Sigmoid colon (tissue), 7 donors: ENCODE measurements at regions of chr1 and their contacts with region 1.

Region 1: DNA sequence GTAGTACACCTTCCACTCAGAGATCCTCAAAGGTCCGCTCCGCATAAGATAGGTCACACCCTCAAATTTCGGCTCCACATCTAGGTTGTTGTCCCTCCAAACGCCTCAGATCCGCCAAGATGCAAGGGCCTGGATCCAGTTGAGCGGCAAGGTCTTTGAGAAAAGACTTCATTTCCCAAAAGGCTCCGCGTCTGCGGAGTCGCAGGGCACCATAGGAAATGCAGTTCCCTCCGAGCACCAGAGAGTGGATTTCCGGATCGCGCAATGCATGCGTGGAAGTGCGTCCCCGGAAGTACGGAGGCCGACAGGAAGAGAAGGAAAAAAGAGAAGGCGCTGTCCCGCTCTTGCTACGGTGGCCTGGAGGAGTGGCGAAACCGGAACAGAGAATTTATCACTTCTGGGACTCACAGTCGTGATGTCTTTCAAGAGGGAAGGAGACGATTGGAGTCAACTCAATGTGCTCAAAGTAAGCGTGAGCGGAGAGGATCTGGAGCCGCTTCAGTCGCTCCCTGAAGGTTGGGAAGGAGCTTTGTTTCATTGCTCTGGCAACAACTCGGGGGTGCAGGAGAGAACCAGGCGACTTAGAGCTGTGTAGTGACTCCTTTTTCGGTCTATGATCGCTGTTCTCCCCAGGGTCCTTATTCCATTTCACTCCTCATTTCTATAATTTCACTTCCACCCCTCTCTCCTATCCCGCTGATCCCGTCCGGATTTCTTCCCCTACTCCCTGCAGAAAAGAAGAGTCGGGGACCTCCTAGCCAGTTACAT is at the starts of genes LYSMD1 and SCNM1:
- DNase-seq: peak; percentile 99
- H3K4me3 ChIP-seq: peak within 1 kb of the TSS; percentile 56 to 84 (median 78)
- H3K27ac ChIP-seq: peak within 1 kb of the TSS; percentile 84 to 93 (median 92)
- H3K4me1 ChIP-seq: peaks cover 0 to 32% (median 24%) of the 10 kb centered on the region in 4 donors
- H3K27me3 ChIP-seq: no peaks in the 10 kb centered on the region
- CTCF ChIP-seq: peak in 1 of 4 experiments; percentile 32
- EP300 ChIP-seq: peak in 2 of 4 donors; percentile 43 to 86
- POLR2A ChIP-seq: peak; percentile 27 to 30
- total RNA-seq, gene LYSMD1: 15.5 to 22.7 (median 19.0) TPM
- total RNA-seq, gene SCNM1: 17.5 to 24.2 (median 19.8) TPM

Region 2: DNA sequence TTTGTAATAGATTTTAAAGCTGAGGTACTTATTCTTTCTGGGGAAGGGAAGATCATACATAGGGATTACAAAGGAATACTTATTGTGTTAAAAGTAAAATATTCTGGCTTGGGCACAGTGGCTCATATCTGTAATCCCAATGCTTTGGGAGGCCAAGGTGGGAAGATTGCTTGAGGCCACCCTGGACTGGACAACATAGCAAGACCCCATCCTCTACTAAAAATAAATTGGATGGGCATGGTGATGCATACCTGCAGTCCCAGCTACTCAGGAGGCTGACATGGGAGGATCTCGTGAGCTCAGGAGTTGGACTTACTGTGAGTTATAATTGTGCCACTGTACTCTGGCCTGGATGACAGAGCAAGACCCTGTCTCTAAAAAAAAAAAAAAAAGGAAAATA is 67.8 kb before region 1 on chr1:
- intact Hi-C with region 1: no loop called
- DNase-seq: no peak
- H3K4me3 ChIP-seq: no peak overlapping the region
- H3K27ac ChIP-seq: no peak overlapping the region
- H3K4me1 ChIP-seq: no peaks in the 10 kb centered on the region
- H3K27me3 ChIP-seq: no peaks in the 10 kb centered on the region
- CTCF ChIP-seq: no peak
- EP300 ChIP-seq: no peak
- POLR2A ChIP-seq: no peak

Region 3: DNA sequence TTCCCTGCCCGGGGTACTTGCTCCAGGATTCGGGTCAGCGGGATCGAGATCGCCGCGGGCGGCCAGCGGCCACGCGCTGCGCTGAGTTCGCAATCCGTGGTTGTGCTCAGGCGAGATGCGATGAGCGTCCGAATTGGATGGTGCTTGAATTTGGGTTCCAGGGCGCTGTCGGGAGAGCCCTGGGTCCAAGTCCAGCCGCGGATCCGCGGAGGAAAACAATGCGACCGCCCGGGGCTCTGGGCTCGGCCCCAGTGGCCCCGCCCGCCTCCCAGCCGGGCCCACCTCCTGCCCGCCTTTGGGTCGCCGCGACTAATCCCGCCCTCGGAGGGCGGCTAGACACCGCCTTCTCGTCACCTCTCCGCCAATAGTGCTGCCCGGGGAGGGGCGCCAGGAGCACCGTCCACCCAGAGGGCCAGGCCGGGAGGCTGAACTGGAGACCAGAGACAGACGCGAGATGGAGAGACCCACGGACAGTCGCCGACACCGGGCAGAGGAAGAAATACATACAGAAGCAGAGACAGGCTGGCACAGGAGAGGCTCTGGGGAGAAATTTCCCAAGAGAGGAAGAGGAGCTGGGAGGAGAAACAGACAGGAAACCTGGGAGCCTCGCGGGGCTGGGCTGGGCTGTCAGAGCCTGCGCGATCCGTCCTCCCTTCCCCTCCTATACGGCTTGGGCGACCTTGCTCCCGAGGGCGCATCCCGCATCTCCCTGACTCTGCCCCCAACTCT is 19.3 kb before region 1 on chr1 and contains the start of gene SEMA6C:
- intact Hi-C with region 1: loop called (anchors 2 kb)
- DNase-seq: peak; percentile 98
- H3K4me3 ChIP-seq: peak within 1 kb of the TSS; percentile 75 to 84 (median 82)
- H3K27ac ChIP-seq: peak within 1 kb of the TSS; percentile 84 to 87 (median 86)
- H3K4me1 ChIP-seq: peaks cover 0 to 42% (median 28%) of the 10 kb centered on the region in 4 donors
- H3K27me3 ChIP-seq: no peaks in the 10 kb centered on the region
- CTCF ChIP-seq: no peak
- EP300 ChIP-seq: no peak
- POLR2A ChIP-seq: peak; percentile 70 to 74
- total RNA-seq, gene SEMA6C: 5.0 to 20.6 (median 7.8) TPM

Region 4: DNA sequence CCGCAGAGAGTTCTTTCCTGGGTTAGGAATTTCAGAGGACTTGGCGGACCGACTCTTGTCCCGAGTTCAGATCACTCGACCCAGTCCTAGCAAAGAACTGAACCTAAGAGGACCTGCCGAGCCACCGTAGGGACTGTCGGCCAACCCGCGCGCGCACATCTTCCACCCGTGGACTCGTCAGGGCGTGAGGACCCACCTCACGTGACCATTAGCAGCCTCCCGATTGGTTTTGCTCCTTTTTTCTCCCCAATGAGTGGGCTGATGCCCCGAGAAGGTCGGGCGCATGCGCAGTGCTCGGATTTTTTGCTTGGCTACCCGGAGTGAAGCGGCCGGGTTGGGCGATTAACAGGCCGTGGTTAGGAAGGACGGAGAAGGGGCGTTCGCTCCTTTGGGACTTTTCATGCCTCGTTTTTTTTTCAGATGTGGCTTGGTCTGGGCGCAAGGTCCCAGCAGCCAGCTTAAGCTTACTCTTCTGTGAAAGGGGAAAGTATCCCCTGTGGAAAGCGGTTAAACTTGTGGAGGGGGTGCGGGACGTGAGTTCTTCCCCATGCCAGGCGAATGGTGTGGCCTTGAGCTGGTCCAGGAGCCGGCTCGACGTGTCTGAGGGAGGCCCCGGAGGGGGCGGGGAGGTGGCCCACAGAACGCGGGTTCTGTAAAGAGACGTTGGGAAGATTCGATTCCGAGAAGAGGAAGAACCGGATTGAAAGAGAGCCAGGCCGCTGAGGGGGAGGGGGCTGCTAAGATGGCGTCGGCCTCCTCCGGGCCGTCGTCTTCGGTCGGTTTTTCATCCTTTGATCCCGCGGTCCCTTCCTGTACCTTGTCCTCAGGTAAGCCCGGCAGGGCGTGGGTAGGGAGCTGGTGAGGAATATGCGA is 32.6 kb after region 1 on chr1 and contains the start of gene PIP5K1A:
- intact Hi-C with region 1: no loop called
- DNase-seq: peak; percentile 100
- H3K4me3 ChIP-seq: peak within 1 kb of the TSS; percentile 62 to 88 (median 70)
- H3K27ac ChIP-seq: peak within 1 kb of the TSS; percentile 90 to 95 (median 93)
- H3K4me1 ChIP-seq: peaks cover 0 to 47% (median 38%) of the 10 kb centered on the region in 4 donors
- H3K27me3 ChIP-seq: no peaks in the 10 kb centered on the region
- CTCF ChIP-seq: no peak
- EP300 ChIP-seq: no peak
- POLR2A ChIP-seq: peak; percentile 84 to 93
- total RNA-seq, gene PIP5K1A: 33.2 to 51.5 (median 37.8) TPM

Region 5: DNA sequence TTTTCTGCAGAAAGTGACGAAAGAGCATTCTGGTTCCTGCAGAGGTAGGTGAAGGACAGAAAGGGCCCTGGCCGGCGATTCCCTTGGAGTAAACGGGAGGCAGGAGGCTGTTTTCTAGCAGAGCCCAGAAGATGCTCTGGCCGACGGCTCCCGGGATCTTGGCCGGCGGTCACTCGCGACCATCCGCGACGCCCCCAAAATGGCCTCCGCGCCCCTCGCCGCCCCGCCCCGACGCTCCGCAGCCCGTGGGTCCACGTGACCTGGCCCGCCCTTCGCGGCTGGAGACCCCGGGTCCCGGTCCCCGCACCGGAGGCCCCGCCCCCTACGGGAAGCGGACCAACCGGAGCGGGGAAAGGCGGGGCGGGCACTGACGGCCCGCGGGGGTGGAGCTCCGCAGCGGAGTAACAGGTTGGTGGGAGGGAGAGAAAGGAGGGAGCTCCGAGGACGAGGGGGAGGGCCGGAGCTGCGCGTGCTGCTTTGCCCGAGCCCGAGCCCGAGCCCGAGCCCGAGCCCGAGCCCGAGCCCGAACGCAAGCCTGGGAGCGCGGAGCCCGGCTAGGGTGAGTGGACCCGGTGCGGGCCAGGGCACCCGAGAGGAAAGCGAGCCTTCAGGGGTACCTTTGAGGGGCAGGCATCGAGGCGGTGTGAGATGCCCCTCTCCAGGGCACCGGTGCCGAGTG is 345.2 kb after region 1 on chr1 and contains the start of gene CGN:
- intact Hi-C with region 1: no loop called
- DNase-seq: peak; percentile 92
- H3K4me3 ChIP-seq: peak within 1 kb of the TSS; percentile 54 to 73 (median 63)
- H3K27ac ChIP-seq: peak within 1 kb of the TSS; percentile 59 to 84 (median 82)
- H3K4me1 ChIP-seq: peaks cover 0 to 17% (median 12%) of the 10 kb centered on the region in 4 donors
- H3K27me3 ChIP-seq: no peaks in the 10 kb centered on the region
- CTCF ChIP-seq: no peak
- EP300 ChIP-seq: no peak
- POLR2A ChIP-seq: peak in 1 of 2 donors; percentile 46
- total RNA-seq, gene CGN: 0.33 to 1.8 (median 0.62) TPM